Heart left ventricle (tissue), 16 donors: ENCODE measurements at regions of chr15 and their contacts with region 1.

Region 1: GRCh38 chr15:32878869-32879805 is 161.3 kb downstream of the GREM1 start:
- DNase-seq: no peak
- ATAC-seq: no peak
- H3K4me3 ChIP-seq: no peak overlapping the region
- H3K27ac ChIP-seq: no peak overlapping the region
- H3K4me1 ChIP-seq: peaks cover 0 to 5% (median 0%) of the 10 kb centered on the region in 12 donors
- H3K27me3 ChIP-seq: no peaks in the 10 kb centered on the region
- CTCF ChIP-seq: no peak
- POLR2A ChIP-seq: no peak

Region 2: GRCh38 chr15:32818758-32819447 is 60.2 kb before region 1 on chr15:
- intact Hi-C with region 1: loop called in 1 of 10 experiments (anchors 5 kb)
- DNase-seq: no peak
- ATAC-seq: no peak
- H3K4me3 ChIP-seq: no peak overlapping the region
- H3K27ac ChIP-seq: no peak overlapping the region
- H3K4me1 ChIP-seq: no peaks in the 10 kb centered on the region
- H3K27me3 ChIP-seq: no peaks in the 10 kb centered on the region
- CTCF ChIP-seq: no peak
- POLR2A ChIP-seq: no peak